GM13977 (cell line): ENCODE measurements at regions of chr14 and their contacts with region 1.

Region 1: DNA sequence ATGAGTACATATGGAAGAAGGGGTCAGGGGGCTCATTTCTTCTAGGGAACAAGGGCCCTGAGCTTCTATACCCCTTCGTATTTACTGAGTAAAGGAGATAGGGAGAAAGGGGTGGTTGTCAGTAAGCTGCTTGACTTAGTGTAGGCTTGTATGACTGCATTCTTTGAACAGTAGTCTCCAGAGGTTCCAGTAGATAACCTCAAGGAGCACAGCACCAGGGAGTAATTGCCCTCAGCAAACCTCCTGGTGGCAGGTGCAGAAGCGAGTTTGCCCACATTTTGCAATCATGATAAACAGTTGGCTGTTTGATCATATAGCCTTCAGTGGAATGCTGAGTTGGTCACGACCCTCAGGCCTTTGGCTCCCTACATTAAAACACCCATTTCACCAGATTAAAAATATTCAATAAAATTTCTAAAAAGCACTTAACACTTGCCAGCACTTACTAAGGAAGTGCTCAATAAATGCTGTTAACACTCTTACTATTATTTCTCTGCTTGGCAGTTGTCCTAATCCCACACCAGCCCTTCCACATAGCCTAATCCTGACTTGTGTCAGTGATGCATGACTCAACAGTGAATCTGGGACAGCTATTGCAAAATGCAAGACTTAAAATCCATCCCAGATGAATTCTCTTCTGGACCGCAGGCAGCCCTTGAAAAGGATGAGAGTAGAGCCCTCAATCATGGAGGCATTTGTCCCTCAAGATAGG is 3.7 kb upstream of the DHRS4L2 start:
- DNase-seq: no peak
- CTCF ChIP-seq: no peak

Region 2: DNA sequence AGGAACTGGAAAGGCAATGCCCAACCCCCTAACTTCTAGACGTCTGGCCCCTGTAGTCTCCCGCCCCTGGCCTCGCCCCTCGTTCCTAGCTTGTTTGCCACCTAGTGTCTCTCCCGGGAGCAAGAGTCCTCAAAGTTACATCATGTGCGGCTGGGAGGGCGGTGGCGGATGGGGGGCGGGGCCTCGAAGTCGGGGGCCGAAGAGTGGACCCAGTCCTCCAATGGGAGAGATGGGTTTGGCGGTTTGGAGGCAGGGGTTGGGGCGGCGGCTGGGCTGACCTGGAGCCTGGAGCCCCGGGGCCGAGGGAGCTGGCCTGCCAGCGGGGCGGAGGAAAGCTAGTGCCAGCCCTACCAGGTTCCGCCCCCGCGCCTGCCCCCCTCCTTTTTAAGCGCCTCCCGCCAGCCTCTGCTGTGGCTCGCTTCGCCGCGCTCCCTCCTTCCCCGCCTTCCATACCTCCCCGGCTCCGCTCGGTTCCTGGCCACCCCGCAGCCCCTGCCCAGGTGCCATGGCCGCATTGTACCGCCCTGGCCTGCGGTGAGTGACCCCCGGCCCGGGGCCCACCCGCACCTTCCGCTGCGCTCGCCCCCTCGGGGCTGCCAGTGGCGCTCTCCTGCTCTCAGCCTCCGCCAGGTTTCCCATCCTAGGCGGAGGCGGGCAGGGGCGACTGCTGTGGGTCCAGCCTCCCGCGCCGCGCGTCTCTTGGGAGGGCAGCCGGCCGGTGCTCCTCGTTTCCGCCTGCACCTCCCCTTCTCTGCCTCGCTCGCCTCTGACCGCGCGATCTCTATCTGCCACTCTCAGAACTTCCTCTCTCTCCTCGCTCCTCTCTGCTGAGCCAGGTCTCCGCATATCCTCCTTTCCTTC is 109.1 kb after region 1 on chr14 and contains the start of gene PCK2:
- in situ Hi-C with region 1: loop called (anchors 25 kb)
- DNase-seq: peak; percentile 92
- CTCF ChIP-seq: no peak